Activated CD4-positive, alpha-beta memory T cell treated with anti-CD3 and anti-CD28 coated beads, Interleukin-2, amount 10 ng/mL, durations not matched to agents 7 days and 5 days (primary cell): ENCODE measurements at regions of chr1 and their contacts with region 1.

Region 1: GRCh38 chr1:175015243-175015642 is 8.0 kb downstream of the MRPS14 start:
- DNase-seq: no peak
- H3K4me3 Mint-ChIP-seq: no peak overlapping the region
- H3K27ac Mint-ChIP-seq: no peak overlapping the region
- H3K4me1 Mint-ChIP-seq: peaks cover 8% of the 10 kb centered on the region
- H3K27me3 Mint-ChIP-seq: no peaks in the 10 kb centered on the region

Region 2: GRCh38 chr1:175005085-175005783 is 10.0 kb before region 1 on chr1:
- CTCF ChIA-PET with region 1: interaction called, 6 read pairs
- POLR2A ChIA-PET with region 1: interaction called, 203 read pairs
- DNase-seq: no peak
- H3K4me3 Mint-ChIP-seq: no peak overlapping the region
- H3K27ac Mint-ChIP-seq: peak overlapping the region; percentile 16
- H3K4me1 Mint-ChIP-seq: peaks cover 49% of the 10 kb centered on the region
- H3K27me3 Mint-ChIP-seq: no peaks in the 10 kb centered on the region